ENCODE measurements at regions of chr7 and their contacts with region 1.

Region 1: DNA sequence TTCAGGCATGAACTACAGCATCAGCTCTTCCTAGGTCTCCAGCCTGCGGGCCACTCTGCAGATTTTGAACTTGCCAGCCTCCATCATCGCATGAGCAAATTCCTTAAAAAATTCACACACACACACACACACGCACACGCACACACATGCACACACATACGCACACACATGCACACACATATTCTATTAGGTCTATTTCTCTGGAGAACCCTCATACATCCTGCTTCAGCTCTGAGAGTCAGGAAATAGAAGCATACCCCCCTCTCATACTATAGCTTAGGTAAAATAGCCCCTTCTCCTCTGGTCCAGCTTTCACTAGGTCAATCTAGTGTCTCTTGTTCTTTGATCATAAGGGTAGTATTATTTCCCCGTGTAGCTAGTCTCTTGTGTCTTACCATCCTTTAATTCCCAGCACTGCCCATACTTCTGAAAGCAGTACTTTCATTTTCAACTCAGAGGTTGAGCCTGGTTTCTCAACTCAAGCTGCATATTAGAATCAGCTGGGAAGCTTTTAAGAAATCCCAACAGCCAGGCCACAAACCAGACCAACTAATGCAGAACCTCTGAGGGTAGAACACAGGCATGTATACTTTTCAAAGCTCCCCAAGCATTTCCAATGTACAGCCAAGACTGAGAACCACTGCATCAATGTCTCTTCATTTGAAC is 30.9 kb upstream of the ITGB8 start:
- DNase-seq: no peak
- ATAC-seq: peak; percentile 14
- H3K4me3 Mint-ChIP-seq: no peak overlapping the region
- H3K27ac Mint-ChIP-seq: peak overlapping the region; percentile 59
- H3K4me1 Mint-ChIP-seq: peaks cover 42% of the 10 kb centered on the region
- H3K27me3 Mint-ChIP-seq: no peaks in the 10 kb centered on the region
- CTCF ChIP-seq: no peak

Region 2: GRCh38 chr7:19919261-19920095 is 380.3 kb before region 1 on chr7:
- CTCF ChIA-PET with region 1: no interaction called
- POLR2A ChIA-PET with region 1: no interaction called
- intact Hi-C with region 1: no loop called
- DNase-seq: no peak
- ATAC-seq: no peak
- H3K4me3 Mint-ChIP-seq: no peak overlapping the region
- H3K27ac Mint-ChIP-seq: no peak overlapping the region
- H3K4me1 Mint-ChIP-seq: no peaks in the 10 kb centered on the region
- H3K27me3 Mint-ChIP-seq: peaks cover 3% of the 10 kb centered on the region
- CTCF ChIP-seq: no peak

Region 3: GRCh38 chr7:20280475-20281351 is 19.1 kb before region 1 on chr7:
- CTCF ChIA-PET with region 1: no interaction called
- POLR2A ChIA-PET with region 1: interaction called, 3 read pairs
- intact Hi-C with region 1: loop called (anchors 2 kb)
- DNase-seq: no peak
- ATAC-seq: no peak
- H3K4me3 Mint-ChIP-seq: no peak overlapping the region
- H3K27ac Mint-ChIP-seq: no peak overlapping the region
- H3K4me1 Mint-ChIP-seq: peaks cover 13% of the 10 kb centered on the region
- H3K27me3 Mint-ChIP-seq: no peaks in the 10 kb centered on the region
- CTCF ChIP-seq: no peak